ENCODE measurements at regions of chr17 and their contacts with region 1.

Region 1: GRCh38 chr17:48335858-48336500 is 94.0 kb downstream of the SKAP1 start:
- DNase-seq: peak; percentile 26
- H3K4me3 ChIP-seq: no peak overlapping the region
- H3K27ac ChIP-seq: no peak overlapping the region
- H3K27me3 ChIP-seq: peaks cover 43% of the 10 kb centered on the region
- CTCF ChIP-seq: peak; percentile 70

Region 2: GRCh38 chr17:48307814-48308411 is 28.1 kb before region 1 on chr17:
- CTCF ChIA-PET with region 1: interaction called, 28 read pairs
- POLR2A ChIA-PET with region 1: no interaction called
- DNase-seq: peak; percentile 32
- H3K4me3 ChIP-seq: no peak overlapping the region
- H3K27ac ChIP-seq: no peak overlapping the region
- H3K27me3 ChIP-seq: peaks cover 51% of the 10 kb centered on the region
- CTCF ChIP-seq: peak; percentile 96

Region 3: GRCh38 chr17:48322060-48322459 is 13.9 kb before region 1 on chr17:
- CTCF ChIA-PET with region 1: interaction called, 12 read pairs
- POLR2A ChIA-PET with region 1: no interaction called
- DNase-seq: no peak
- H3K4me3 ChIP-seq: no peak overlapping the region
- H3K27ac ChIP-seq: no peak overlapping the region
- H3K27me3 ChIP-seq: peaks cover 14% of the 10 kb centered on the region
- CTCF ChIP-seq: peak; percentile 28

Region 4: GRCh38 chr17:48586355-48587258 is 250.6 kb after region 1 on chr17:
- CTCF ChIA-PET with region 1: interaction called, 11 read pairs
- POLR2A ChIA-PET with region 1: no interaction called
- DNase-seq: no peak
- H3K4me3 ChIP-seq: peak overlapping the region; percentile 89
- H3K27ac ChIP-seq: peak overlapping the region; percentile 97
- H3K27me3 ChIP-seq: no peaks in the 10 kb centered on the region
- CTCF ChIP-seq: no peak

Region 5: GRCh38 chr17:48593840-48594537 is 258.0 kb after region 1 on chr17:
- CTCF ChIA-PET with region 1: interaction called, 53 read pairs
- POLR2A ChIA-PET with region 1: no interaction called
- DNase-seq: peak; percentile 93
- H3K4me3 ChIP-seq: peak overlapping the region; percentile 89
- H3K27ac ChIP-seq: peak overlapping the region; percentile 91
- H3K27me3 ChIP-seq: no peaks in the 10 kb centered on the region
- CTCF ChIP-seq: peak; percentile 95

Region 6: GRCh38 chr17:48612854-48613691 is 277.1 kb after region 1 on chr17:
- CTCF ChIA-PET with region 1: interaction called, 42 read pairs
- POLR2A ChIA-PET with region 1: no interaction called
- DNase-seq: no peak
- H3K4me3 ChIP-seq: peak overlapping the region; percentile 67
- H3K27ac ChIP-seq: peak overlapping the region; percentile 31
- H3K27me3 ChIP-seq: peaks cover 45% of the 10 kb centered on the region
- CTCF ChIP-seq: peak; percentile 38

Region 7: GRCh38 chr17:48618256-48618897 is 282.4 kb after region 1 on chr17:
- CTCF ChIA-PET with region 1: interaction called, 42 read pairs
- POLR2A ChIA-PET with region 1: no interaction called
- DNase-seq: no peak
- H3K4me3 ChIP-seq: no peak overlapping the region
- H3K27ac ChIP-seq: no peak overlapping the region
- H3K27me3 ChIP-seq: peaks cover 96% of the 10 kb centered on the region
- CTCF ChIP-seq: peak; percentile 96

Measured in AG04450 (cell line).